Activated CD4-positive, alpha-beta T cell treated with anti-CD3 and anti-CD28 coated beads, Interleukin-2, amount 10 ng/mL, durations not matched to agents 7 days and 5 days (primary cell): ENCODE measurements at regions of chr7 and their contacts with region 1.

Region 1: GRCh38 chr7:98698976-98699375 is 81.9 kb downstream of the NPTX2 start:
- DNase-seq: no peak
- H3K4me3 Mint-ChIP-seq: no peak overlapping the region
- H3K27ac Mint-ChIP-seq: no peak overlapping the region
- H3K4me1 Mint-ChIP-seq: no peaks in the 10 kb centered on the region
- H3K27me3 Mint-ChIP-seq: no peaks in the 10 kb centered on the region

Region 2: GRCh38 chr7:98687078-98687800 is 11.7 kb before region 1 on chr7:
- CTCF ChIA-PET with region 1: no interaction called
- POLR2A ChIA-PET with region 1: no interaction called
- DNase-seq: no peak
- H3K4me3 Mint-ChIP-seq: no peak overlapping the region
- H3K27ac Mint-ChIP-seq: no peak overlapping the region
- H3K4me1 Mint-ChIP-seq: no peaks in the 10 kb centered on the region
- H3K27me3 Mint-ChIP-seq: no peaks in the 10 kb centered on the region

Region 3: DNA sequence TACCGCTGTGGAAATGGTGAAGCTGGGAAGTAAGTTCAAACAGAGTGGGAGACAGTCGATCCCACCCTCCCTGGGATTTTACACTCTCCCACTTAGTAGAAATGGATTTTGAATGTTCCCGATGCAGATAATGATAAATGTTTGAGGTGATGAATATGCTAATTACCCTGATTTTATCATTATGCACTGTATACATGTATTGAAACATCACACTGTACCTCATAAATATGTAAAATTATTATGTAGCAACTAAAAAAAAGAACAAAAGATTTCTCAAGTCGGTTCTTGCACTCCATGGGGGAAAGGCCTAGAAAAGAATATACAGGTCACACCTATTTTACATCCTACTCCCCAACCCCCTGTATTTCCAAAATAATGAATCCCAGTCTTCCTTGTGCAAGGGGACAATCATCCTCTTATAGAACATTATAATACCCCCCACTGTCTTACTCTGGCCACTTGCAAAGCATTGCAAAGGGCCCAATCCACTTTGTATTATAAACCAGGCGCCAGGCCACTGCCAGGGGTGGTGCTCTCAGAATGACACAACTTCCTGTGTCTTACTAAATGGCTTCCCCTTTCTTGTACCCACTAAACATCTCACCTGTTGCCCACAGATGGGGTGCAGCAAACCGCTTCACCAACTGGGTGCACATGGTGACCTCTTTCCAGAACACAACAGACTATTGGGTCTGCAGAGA is 1198.5 kb after region 1 on chr7:
- CTCF ChIA-PET with region 1: no interaction called
- POLR2A ChIA-PET with region 1: interaction called, 10 read pairs
- DNase-seq: no peak
- H3K4me3 Mint-ChIP-seq: no peak overlapping the region
- H3K27ac Mint-ChIP-seq: no peak overlapping the region
- H3K4me1 Mint-ChIP-seq: peaks cover 13% of the 10 kb centered on the region
- H3K27me3 Mint-ChIP-seq: no peaks in the 10 kb centered on the region